ENCODE measurements at regions of chr11 and their contacts with region 1.

Region 1: GRCh38 chr11:44149651-44150050 is 54.2 kb downstream of the EXT2 start:
- DNase-seq: no peak
- H3K4me3 ChIP-seq: no peak overlapping the region
- H3K27ac ChIP-seq: no peak overlapping the region
- H3K4me1 ChIP-seq: no peaks in the 10 kb centered on the region
- H3K27me3 ChIP-seq: no peaks in the 10 kb centered on the region
- CTCF ChIP-seq: no peak
- POLR2A ChIP-seq: no peak

Region 2: GRCh38 chr11:44110231-44110679 is 39.4 kb before region 1 on chr11:
- intact Hi-C with region 1: no loop called
- DNase-seq: peak in 1 of 2 donors; percentile 26
- H3K4me3 ChIP-seq: no peak overlapping the region
- H3K27ac ChIP-seq: no peak overlapping the region
- H3K4me1 ChIP-seq: no peaks in the 10 kb centered on the region
- H3K27me3 ChIP-seq: no peaks in the 10 kb centered on the region
- CTCF ChIP-seq: peak in 2 of 3 donors; percentile 47 to 54
- POLR2A ChIP-seq: no peak

Region 3: GRCh38 chr11:44159848-44160721 is 10.4 kb after region 1 on chr11:
- intact Hi-C with region 1: loop called (anchors 1 kb)
- DNase-seq: no peak
- H3K4me3 ChIP-seq: no peak overlapping the region
- H3K27ac ChIP-seq: no peak overlapping the region
- H3K4me1 ChIP-seq: no peaks in the 10 kb centered on the region
- H3K27me3 ChIP-seq: no peaks in the 10 kb centered on the region
- CTCF ChIP-seq: no peak
- POLR2A ChIP-seq: no peak

Region 4: DNA sequence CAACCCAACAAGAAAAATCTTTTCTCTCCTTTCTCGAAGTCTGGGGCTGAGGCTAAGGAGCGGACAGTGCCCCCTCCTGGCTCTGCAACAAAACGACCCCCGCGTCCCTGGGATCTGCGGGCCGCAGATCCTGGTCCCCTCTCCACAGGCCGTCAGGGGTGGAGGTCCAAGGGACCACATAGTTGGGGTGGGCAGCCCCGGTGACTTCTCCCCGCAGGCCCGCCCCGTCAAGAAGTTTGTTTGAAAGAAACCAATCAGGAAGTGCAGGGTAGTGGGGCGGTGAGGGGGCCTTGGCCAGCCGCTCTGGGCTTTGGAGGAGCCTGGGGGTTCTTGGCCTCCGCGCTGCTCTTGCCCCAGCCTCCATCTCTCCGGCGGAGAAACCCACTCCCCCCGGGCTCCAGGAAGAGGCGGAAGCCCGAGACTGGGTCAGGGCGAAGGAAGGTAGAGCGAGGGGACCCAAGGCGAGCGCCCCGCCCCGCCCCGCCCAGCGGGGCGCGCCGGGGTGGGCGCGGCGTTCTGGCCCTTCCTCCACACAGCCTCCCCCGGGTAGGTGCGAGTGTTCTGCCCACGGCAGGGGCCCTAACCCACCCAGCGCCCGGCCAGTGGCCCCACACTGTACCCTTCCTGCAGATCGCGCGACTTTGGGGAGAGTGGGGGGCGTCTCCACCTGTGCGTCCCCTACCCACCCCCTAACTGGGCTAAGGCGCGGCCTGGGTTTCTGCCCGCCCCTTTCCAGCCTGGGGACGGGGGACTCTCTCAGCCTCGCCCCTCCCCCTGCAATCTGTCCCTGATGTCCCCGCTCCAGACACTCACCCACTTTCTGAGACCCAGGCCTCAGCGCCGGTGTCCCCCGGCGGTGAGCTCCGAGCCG is 799.7 kb after region 1 on chr11:
- intact Hi-C with region 1: loop called (anchors 5 kb)
- DNase-seq: no peak
- H3K4me3 ChIP-seq: peak overlapping the region; percentile 66 to 99 (median 91)
- H3K27ac ChIP-seq: peak overlapping the region; percentile 90 to 95
- H3K4me1 ChIP-seq: peaks cover 0 to 4% of the 10 kb centered on the region in 2 donors
- H3K27me3 ChIP-seq: no peaks in the 10 kb centered on the region
- CTCF ChIP-seq: peak; percentile 25 to 56 (median 31)
- POLR2A ChIP-seq: no peak

Region 5: GRCh38 chr11:45301537-45302246 is 1152.0 kb after region 1 on chr11:
- intact Hi-C with region 1: no loop called
- DNase-seq: no peak
- H3K4me3 ChIP-seq: no peak overlapping the region
- H3K27ac ChIP-seq: no peak overlapping the region
- H3K4me1 ChIP-seq: no peaks in the 10 kb centered on the region
- H3K27me3 ChIP-seq: no peaks in the 10 kb centered on the region
- CTCF ChIP-seq: no peak
- POLR2A ChIP-seq: no peak